AG04449 (cell line): ENCODE measurements at regions of chr15 and their contacts with region 1.

Region 1: DNA sequence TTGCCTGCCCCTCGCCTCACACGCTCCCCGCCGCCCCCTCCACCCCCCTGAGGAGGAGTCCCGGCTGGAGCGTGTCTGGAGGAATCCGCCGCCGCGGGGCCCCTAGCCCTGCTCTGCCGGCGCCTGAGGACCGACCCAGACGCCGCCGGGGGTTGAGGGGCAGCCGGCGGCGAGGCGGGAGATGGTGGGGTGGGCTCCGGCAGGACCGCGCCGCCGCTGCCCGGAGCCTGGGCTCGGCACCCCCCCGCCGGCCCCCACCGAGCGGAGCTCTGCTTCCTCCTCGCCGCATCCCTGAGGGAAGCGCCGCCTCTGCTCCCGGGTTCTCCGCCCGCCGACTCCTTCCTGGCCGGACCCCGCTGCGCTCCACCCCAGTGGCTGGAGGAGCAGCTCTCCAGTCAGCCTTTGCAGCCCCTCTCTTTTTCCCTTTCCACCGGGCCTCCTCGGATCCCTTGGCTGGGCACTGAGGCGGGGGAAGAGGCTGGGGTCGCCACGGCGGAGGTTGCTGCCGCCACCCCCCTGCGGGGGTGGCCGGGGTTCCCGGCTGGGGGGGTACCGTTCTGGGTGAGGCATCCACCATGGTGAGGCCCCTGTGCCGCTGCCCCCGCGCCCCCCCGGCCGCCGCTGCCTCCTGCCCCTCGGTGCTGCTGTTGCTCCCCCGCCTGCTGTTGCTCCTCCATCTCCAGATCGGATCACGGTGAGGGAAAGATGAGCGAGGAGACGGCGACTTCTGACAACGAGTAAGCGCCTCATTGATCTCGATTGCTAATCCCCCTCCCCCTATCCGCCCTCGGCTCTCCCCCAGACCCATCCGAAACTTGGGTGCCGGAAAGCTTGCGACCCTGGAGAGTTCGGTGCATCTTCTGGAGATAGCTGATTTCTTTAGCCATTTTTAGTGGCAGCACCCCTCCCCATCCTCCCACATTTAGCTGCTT is at the start of gene SPRED1:
- DNase-seq: no peak
- H3K4me3 ChIP-seq: peak within 1 kb of the TSS; percentile 91
- CTCF ChIP-seq: no peak

Region 2: GRCh38 chr15:38002883-38003477 is 249.8 kb before region 1 on chr15:
- CTCF ChIA-PET with region 1: interaction called, 17 read pairs
- POLR2A ChIA-PET with region 1: interaction called, 4 read pairs
- DNase-seq: no peak
- H3K4me3 ChIP-seq: no peak overlapping the region
- CTCF ChIP-seq: peak; percentile 81

Region 3: DNA sequence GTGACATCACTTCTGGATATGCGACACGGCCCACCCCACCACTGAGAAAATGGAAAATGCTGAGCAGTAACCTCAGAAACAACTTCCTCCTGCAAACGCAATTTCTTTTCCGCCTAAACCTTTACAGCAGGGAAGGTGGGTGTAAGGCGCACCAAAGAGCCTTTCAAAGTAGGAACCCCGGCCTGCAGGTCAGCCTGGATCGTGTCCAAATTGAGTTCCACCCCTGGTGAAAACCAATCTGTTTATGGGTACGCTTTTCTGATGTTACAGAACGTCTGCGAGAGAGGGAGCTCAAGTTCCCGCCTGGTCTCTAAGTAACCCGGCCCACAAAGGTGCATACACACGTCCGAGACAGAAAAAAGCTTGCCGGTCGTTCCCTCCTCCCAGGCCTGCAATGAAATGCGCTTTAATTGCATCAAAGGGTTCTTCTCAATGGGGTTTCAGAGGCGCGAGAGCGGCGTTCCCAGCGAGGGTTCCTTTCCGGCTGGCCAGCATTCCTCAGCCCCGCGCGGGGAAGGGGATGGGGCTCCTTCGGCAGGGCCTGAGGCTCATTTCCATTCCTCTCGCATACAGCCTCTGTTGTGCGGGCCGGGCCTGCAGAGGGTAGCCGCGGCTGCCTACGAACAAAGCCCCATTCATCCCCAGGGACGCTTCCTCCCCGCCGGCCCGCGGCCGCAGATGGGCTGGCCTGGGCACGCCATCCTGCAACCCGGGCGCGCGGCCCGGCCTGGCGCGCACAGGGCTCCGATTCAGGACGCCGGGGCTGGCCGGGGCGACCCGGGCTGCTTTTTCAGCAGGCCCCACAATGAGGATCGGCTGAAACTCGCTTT is 180.2 kb before region 1 on chr15:
- CTCF ChIA-PET with region 1: interaction called, 4 read pairs
- POLR2A ChIA-PET with region 1: interaction called, 17 read pairs
- DNase-seq: no peak
- H3K4me3 ChIP-seq: peak overlapping the region; percentile 53
- CTCF ChIP-seq: peak; percentile 38

Region 4: DNA sequence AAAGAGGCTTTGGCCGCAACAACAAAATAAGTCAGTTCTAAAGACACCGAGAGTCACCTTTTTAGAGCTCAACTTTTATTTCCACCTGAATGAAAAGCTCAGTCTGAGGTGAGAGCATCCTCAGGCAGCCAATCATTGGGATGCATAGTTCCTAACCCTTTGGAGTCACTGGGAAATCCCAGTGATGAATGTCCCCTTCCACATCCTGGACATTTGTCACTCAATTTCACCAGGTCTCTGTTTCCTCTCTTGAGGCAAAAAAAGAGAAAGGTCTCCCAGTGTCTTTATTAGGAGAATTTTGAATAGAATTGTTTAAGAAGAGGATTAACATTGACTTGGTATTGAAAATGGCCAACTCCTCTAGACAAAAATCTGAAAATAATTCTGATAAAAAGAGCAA is 137.6 kb before region 1 on chr15:
- CTCF ChIA-PET with region 1: no interaction called
- POLR2A ChIA-PET with region 1: no interaction called
- DNase-seq: no peak
- H3K4me3 ChIP-seq: no peak overlapping the region
- CTCF ChIP-seq: no peak

Region 5: GRCh38 chr15:38129531-38130204 is 123.1 kb before region 1 on chr15:
- CTCF ChIA-PET with region 1: no interaction called
- POLR2A ChIA-PET with region 1: interaction called, 28 read pairs
- DNase-seq: peak; percentile 85
- H3K4me3 ChIP-seq: peak overlapping the region; percentile 44
- CTCF ChIP-seq: no peak

Region 6: GRCh38 chr15:38266247-38266986 is 13.7 kb after region 1 on chr15:
- CTCF ChIA-PET with region 1: interaction called, 3 read pairs
- POLR2A ChIA-PET with region 1: interaction called, 31 read pairs
- DNase-seq: no peak
- H3K4me3 ChIP-seq: peak overlapping the region; percentile 37
- CTCF ChIP-seq: no peak

Region 7: GRCh38 chr15:38398134-38398533 is 145.4 kb after region 1 on chr15:
- CTCF ChIA-PET with region 1: no interaction called
- POLR2A ChIA-PET with region 1: interaction called, 11 read pairs
- DNase-seq: peak; percentile 97
- H3K4me3 ChIP-seq: no peak overlapping the region
- CTCF ChIP-seq: no peak